HCT116 (cell line): ENCODE measurements at regions of chr13 and their contacts with region 1.

Region 1: DNA sequence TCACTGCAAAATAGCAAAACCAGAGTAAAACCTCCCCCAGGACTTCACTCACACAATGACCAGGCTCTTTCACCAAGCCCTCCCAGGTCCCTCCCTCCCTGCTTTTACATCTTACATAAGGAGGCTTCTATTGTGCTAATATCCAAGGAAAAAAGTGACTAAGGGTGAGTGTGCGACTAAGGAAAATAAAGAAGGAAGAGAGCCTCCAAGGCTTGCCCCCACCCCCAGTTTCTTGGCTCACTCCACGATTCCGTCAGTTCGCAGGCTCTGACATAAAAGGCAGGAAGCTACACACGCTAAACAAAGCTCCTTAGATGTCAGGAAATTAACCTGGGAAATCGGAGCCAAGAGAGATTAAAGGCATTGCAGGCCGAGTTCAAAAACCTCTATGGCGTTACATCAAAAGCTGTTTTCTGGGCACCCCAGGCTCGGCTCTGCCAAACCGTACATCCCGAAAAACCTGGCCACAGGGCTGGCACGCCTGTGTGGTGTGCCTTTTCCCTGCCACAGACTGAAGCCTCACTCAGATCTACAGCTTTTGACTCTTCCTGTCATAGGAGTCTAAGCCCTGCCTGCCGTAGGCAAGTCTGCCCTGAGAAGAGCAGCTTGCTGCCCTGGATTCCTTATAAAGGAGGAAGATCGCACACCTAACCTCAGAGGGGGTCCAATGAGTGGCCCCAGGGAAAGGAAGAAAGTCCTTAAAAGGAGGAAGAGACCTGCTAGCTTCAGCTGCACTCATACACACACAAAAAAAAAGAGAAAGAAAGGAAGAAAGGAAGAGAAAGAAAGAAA is 67.0 kb upstream of the SERP2 start:
- DNase-seq: peak; percentile 99
- ATAC-seq: peak; percentile 84
- H3K4me3 ChIP-seq: peak overlapping the region; percentile 5 to 35
- H3K27ac ChIP-seq: peak overlapping the region; percentile 96
- H3K4me1 ChIP-seq: peaks cover 66 to 99% of the 10 kb centered on the region in 2 experiments
- H3K27me3 ChIP-seq: no peaks in the 10 kb centered on the region
- CTCF ChIP-seq: no peak
- POLR2A ChIP-seq: no peak
- RAD21 ChIP-seq: no peak

Region 2: DNA sequence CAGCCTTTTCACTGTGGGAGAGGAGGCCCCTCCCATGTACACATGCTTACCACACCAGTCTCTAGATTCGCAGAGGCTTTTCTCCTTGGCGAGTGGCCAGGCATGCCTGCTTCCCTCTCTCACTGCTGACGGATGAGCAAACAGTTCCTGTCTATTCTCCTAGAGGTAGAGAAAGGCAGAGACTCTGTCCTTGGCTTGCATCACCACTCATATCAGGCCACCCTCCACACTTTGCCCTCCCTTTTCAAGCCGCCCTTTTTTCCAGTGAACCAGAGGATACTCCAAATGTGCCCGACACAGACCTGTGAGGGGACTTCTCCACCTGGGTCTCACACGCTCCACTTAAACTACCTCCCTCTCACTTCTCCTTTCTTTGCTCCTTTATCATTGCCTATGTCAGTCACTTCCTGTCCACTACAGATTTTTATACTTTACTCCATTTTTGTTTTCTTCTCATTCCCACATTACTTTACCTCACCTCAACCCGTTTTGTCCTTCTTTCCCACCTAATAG is 998.6 kb before region 1 on chr13:
- CTCF ChIA-PET with region 1: no interaction called
- POLR2A ChIA-PET with region 1: no interaction called
- RAD21 ChIA-PET with region 1: no interaction called
- intact Hi-C with region 1: no loop called
- DNase-seq: no peak
- ATAC-seq: no peak
- H3K4me3 ChIP-seq: no peak overlapping the region
- H3K27ac ChIP-seq: no peak overlapping the region
- H3K4me1 ChIP-seq: no peaks in the 10 kb centered on the region
- H3K27me3 ChIP-seq: no peaks in the 10 kb centered on the region; the same call in 1 of the 2 replicates
- CTCF ChIP-seq: no peak
- POLR2A ChIP-seq: no peak
- RAD21 ChIP-seq: no peak

Region 3: DNA sequence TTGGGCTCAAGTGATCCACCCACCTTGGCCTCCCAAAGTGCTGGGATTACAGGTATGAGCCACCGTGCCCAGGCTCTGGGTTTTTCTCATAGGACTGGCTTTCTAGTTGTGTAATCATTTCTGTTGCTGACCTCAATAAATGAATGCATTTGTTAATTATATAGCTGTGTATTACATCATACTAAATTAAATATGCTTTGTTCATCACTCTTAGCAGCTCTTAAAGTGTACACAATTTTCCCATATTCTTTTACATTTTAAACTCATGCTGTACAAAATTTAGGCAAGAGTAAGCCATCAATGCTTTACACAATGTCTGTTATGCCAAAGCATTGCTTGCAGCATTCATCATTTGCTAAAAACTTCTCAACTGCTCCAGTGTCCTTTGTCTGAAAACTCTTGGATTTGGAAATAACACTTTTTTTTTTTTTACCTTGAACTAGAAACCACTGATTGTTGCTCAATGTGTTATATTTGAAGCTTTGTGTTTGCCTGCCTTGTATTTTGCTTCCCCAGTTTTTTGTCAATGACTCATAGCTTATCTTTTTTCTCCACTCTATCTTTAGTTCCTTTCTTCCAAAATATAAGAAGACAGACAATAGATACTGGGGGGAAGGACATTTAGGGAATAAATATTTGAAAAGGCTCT is 458.5 kb before region 1 on chr13:
- CTCF ChIA-PET with region 1: no interaction called
- POLR2A ChIA-PET with region 1: no interaction called
- RAD21 ChIA-PET with region 1: no interaction called
- intact Hi-C with region 1: no loop called
- DNase-seq: no peak
- ATAC-seq: no peak
- H3K4me3 ChIP-seq: no peak overlapping the region
- H3K27ac ChIP-seq: no peak overlapping the region
- H3K4me1 ChIP-seq: 0 out of 4 replicates have a peak, but pooled peaks cover 0 to 4% of the 10 kb centered on the region in 2 experiments
- H3K27me3 ChIP-seq: no peaks in the 10 kb centered on the region
- CTCF ChIP-seq: no peak
- POLR2A ChIP-seq: no peak
- RAD21 ChIP-seq: no peak

Region 4: DNA sequence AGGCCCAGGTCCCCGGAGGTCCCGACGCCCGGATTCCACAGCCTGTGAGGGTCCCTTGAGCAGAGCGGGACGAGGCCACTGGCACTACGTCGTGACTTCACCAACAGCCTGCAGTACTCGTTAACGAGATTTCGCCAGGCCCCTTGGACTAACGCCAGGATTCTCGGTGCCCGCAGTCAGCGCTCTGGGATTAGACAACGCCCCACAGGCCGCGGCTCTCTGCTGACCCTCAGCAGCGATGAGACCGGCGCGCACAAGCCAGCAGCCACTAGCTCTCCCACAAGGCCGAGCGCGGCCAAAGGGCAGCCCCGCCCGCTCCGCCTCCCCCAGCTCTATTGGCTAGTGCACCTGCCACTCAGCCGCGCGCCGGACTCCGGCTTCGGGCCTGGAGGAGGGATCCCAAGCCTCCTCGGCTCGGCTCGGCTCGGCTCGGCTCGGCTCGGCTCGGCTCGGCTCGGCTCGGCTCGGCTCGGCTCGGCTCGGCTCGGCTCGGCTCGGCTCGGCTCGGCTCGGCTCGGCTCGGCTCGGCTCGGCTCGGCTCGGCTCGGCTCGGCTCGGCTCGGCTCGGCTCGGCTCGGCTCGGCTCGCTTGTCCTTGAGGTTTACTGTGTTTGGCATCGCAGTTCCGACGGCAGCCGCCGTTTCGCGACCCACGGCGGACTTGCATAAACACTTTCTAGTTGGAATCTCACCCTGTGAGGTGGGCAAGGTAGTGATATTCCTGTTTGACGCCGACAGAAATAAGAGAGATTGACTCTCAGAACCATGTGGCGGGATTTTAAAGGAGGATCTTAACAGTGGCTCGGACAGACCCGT is 164.7 kb before region 1 on chr13:
- CTCF ChIA-PET with region 1: no interaction called
- POLR2A ChIA-PET with region 1: no interaction called
- RAD21 ChIA-PET with region 1: no interaction called
- intact Hi-C with region 1: loop called (anchors 2 kb)
- DNase-seq: peak; percentile 85
- ATAC-seq: peak; percentile 98
- H3K4me3 ChIP-seq: peak overlapping the region; percentile 66 to 72
- H3K27ac ChIP-seq: peak overlapping the region; percentile 89
- H3K4me1 ChIP-seq: peaks cover 18 to 33% of the 10 kb centered on the region in 2 experiments
- H3K27me3 ChIP-seq: no peaks in the 10 kb centered on the region
- CTCF ChIP-seq: no peak
- POLR2A ChIP-seq: peak; percentile 81
- RAD21 ChIP-seq: no peak; the same call in 1 of the 2 replicates

Region 5: GRCh38 chr13:44364348-44365049 is 57.9 kb after region 1 on chr13:
- CTCF ChIA-PET with region 1: no interaction called
- POLR2A ChIA-PET with region 1: interaction called, 7 read pairs
- RAD21 ChIA-PET with region 1: no interaction called
- intact Hi-C with region 1: loop called (anchors 2 kb)
- DNase-seq: peak; percentile 71
- ATAC-seq: peak; percentile 79
- H3K4me3 ChIP-seq: peak overlapping the region in 1 of 2 experiments; percentile 11; a peak in 2 of 4 replicates
- H3K27ac ChIP-seq: peak overlapping the region; percentile 28; the same call in 1 of the 2 replicates
- H3K4me1 ChIP-seq: peaks cover 19 to 75% of the 10 kb centered on the region in 2 experiments; a peak in 3 of 4 replicates
- H3K27me3 ChIP-seq: no peaks in the 10 kb centered on the region
- CTCF ChIP-seq: no peak
- POLR2A ChIP-seq: no peak
- RAD21 ChIP-seq: no peak

Region 6: GRCh38 chr13:44719857-44720671 is 413.5 kb after region 1 on chr13:
- CTCF ChIA-PET with region 1: no interaction called
- POLR2A ChIA-PET with region 1: no interaction called
- RAD21 ChIA-PET with region 1: no interaction called
- intact Hi-C with region 1: no loop called
- DNase-seq: no peak
- ATAC-seq: no peak
- H3K4me3 ChIP-seq: no peak overlapping the region
- H3K27ac ChIP-seq: no peak overlapping the region
- H3K4me1 ChIP-seq: peaks cover 3 to 22% of the 10 kb centered on the region in 2 experiments
- H3K27me3 ChIP-seq: no peaks in the 10 kb centered on the region
- CTCF ChIP-seq: no peak
- POLR2A ChIP-seq: no peak
- RAD21 ChIP-seq: no peak